ENCODE measurements at regions of chr3 and their contacts with region 1.

Region 1: GRCh38 chr3:119240591-119241434 is at the start of gene B4GALT4:
- DNase-seq: peak; percentile 81
- H3K4me3 Mint-ChIP-seq: peak within 1 kb of the TSS; percentile 81
- H3K27ac Mint-ChIP-seq: peak within 1 kb of the TSS; percentile 86
- H3K4me1 Mint-ChIP-seq: peaks cover 31% of the 10 kb centered on the region
- H3K27me3 Mint-ChIP-seq: no peaks in the 10 kb centered on the region
- total RNA-seq, gene B4GALT4: 13.5 to 14.2 TPM

Region 2: DNA sequence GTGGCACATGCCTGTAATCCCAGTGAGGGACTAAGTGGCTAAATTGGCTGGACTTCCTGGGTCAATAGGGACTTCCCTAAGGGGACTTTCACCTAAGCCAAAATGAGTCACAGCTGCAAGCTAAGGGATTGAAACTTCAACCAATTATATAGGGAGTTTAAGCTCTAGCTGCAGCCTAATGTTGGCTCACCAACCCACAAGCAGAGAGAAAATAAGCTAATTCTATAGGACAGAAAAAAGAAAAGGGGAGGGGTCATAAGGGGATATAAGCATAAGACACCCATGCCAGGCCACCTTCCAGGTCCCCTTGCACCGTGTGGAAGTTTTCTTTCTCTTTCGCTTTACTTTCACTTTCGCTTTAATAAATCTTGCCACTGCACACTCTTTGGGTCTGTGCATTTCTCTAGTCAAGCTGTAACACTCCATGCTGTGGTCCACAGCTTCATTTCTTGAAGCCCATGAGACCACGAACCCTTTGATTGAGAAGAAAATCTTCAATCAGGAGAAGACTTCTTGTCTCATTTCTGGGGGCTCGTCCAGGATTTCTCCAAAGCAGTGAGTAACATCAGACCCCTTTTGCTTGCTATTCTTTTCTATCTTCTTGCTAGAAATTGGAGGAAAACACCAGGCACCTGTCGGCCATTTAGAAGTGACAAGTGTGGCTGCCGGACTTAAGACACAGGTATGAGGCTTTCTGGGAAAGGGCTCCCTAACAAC is 398.5 kb before region 1 on chr3:
- CTCF ChIA-PET with region 1: no interaction called
- POLR2A ChIA-PET with region 1: no interaction called
- intact Hi-C with region 1: no loop called
- DNase-seq: no peak
- H3K4me3 Mint-ChIP-seq: no peak overlapping the region
- H3K27ac Mint-ChIP-seq: no peak overlapping the region
- H3K4me1 Mint-ChIP-seq: no peaks in the 10 kb centered on the region
- H3K27me3 Mint-ChIP-seq: peaks cover 4% of the 10 kb centered on the region

Region 3: DNA sequence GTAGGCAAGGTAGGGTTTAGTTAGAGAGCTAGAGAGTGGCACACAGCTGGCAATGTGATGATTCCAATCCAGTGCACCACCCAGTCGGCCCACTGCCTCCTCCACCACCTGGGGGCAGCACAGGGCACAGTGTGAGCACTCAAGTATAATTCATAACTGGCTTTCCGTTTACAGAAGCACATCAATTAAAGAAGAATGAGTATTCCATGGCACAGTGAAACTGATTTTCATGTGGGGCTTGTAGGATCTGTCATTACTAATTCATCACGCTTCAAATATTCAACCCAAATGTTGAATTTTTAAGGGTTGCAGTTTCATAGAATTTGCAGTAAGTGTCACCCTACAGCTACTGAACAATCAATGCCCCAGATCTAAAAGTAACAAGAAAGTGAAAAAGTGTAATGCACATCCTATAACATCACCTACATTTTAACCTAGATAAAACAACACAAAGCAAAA is 356.0 kb before region 1 on chr3:
- CTCF ChIA-PET with region 1: interaction called, 114 read pairs
- POLR2A ChIA-PET with region 1: no interaction called
- intact Hi-C with region 1: loop called (anchors 1 kb)
- DNase-seq: peak; percentile 84
- H3K4me3 Mint-ChIP-seq: no peak overlapping the region
- H3K27ac Mint-ChIP-seq: no peak overlapping the region
- H3K4me1 Mint-ChIP-seq: no peaks in the 10 kb centered on the region
- H3K27me3 Mint-ChIP-seq: peaks cover 7% of the 10 kb centered on the region

Region 4: DNA sequence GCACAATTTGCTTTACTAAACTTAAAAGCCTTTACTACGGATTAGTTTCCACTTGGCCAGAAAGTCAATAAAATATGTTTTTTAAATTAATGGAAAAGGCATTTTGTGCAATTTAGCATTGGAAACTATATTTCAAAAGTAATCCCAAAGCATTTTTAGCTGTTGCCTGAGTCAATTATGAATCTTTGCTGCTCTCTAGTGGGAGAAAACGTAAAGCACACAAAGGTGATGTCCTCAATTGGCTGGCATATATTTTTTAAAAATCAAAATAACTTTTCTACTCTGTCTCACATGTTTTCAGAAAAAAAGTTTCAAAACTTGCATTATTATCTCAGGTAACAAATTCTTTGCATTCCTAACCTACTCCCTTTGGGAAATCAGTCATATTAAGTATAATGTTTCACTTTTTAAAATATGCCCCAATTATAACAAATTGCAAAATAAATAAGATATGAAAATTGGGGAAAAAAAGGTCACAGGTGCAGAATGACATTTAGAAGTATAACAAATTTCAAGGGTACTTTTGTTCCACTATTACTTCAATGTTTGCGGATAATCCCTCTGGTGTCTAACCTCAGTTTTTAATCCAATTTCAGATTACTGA is 142.1 kb before region 1 on chr3:
- CTCF ChIA-PET with region 1: interaction called, 9 read pairs
- POLR2A ChIA-PET with region 1: no interaction called
- intact Hi-C with region 1: loop called (anchors 1 kb)
- DNase-seq: no peak
- H3K4me3 Mint-ChIP-seq: no peak overlapping the region
- H3K27ac Mint-ChIP-seq: no peak overlapping the region
- H3K4me1 Mint-ChIP-seq: no peaks in the 10 kb centered on the region
- H3K27me3 Mint-ChIP-seq: no peaks in the 10 kb centered on the region

Region 5: GRCh38 chr3:119230745-119231144 is 10.1 kb before region 1 on chr3:
- CTCF ChIA-PET with region 1: interaction called, 9 read pairs
- POLR2A ChIA-PET with region 1: no interaction called
- intact Hi-C with region 1: loop called (anchors 1 kb)
- DNase-seq: no peak
- H3K4me3 Mint-ChIP-seq: no peak overlapping the region
- H3K27ac Mint-ChIP-seq: no peak overlapping the region
- H3K4me1 Mint-ChIP-seq: peaks cover 40% of the 10 kb centered on the region
- H3K27me3 Mint-ChIP-seq: no peaks in the 10 kb centered on the region

Region 6: DNA sequence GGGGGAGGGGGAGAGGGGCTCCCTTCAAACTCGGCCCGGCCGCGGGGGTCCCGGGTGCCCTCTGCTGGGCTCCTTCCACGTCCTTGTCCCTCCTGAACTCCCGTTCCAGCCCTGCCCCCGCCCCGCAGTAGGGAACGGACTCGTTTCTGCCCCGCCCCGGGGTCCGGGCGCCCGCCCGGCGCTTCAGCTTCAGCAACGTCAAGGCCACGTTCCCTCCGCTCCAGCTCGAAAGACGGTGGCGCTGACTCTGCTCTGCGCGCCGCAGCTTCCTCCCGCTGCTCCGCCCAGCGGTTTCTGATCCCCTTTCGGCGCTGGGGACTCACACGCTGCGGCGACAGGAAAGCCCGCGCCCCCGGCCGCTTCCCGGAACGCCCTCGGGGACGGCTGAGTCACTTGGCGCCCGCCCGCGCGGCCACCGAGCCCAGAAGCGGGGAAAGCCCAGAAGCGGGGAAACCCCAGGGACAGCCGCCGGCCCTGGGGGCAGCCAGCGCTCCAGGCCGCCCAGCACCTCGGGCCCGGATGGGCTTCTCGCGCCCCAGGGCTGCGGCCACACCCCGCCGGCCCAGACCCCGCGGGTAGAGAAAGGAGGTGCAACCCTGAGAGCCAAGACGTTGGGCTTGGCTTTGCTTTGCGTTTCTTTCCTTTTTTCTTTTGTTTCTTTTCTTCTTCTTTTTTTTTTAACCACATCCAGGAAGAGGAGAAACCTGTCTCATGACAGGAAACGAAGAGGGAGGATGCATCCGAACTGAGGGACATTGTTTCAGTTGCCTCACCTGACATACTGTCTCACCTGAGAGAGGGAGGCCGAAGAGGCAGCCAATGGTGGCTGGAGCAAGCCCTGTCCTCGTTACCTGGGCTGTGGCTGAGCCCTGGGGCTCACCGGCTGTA is 82.3 kb after region 1 on chr3:
- CTCF ChIA-PET with region 1: interaction called, 8 read pairs
- POLR2A ChIA-PET with region 1: interaction called, 6 read pairs
- intact Hi-C with region 1: loop called (anchors 1 kb)
- DNase-seq: peak; percentile 97
- H3K4me3 Mint-ChIP-seq: peak overlapping the region; percentile 82
- H3K27ac Mint-ChIP-seq: peak overlapping the region; percentile 95
- H3K4me1 Mint-ChIP-seq: peaks cover 41% of the 10 kb centered on the region
- H3K27me3 Mint-ChIP-seq: no peaks in the 10 kb centered on the region

Region 7: DNA sequence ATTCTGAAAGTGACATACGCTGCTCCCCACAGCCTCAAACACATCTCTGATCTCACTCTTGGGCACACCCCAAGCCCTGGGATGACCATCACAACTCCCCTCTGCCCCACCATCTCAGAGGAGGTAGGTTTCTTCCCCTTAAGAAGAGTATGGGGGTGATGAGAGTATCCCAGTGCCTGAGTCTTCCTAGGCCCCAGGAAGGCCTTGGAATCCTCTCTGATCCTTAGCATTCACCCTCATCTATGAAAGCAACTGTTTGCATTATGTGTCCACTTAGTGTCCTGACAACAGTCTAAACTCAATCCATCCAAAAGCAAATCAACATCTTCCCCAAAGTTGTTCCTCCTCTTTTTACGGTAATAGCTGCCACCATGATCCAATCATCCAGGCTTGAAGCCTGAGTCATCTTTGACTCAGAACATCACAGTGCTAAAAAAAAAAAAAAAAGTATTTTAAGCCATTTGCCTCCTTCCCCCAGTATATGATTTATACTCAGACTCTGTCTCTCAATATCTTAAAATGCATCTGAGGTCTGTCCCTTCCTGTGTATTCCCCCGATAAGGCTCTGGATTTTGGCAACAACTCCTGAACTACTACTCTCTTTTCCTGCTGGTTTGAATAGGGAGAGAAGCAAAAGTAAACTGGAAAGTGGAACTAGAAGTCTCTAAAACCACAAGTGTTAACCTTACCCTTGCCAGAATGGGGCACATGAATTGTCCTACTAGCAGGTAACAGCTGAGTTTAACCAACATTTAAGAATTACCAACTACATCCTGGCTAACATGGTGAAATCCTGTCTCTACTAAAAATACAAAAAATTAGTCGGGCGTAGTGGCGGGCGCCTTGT is 397.1 kb after region 1 on chr3:
- CTCF ChIA-PET with region 1: interaction called, 4 read pairs
- POLR2A ChIA-PET with region 1: no interaction called
- intact Hi-C with region 1: loop called (anchors 2 kb)
- DNase-seq: no peak
- H3K4me3 Mint-ChIP-seq: no peak overlapping the region
- H3K27ac Mint-ChIP-seq: peak overlapping the region; percentile 92
- H3K4me1 Mint-ChIP-seq: peaks cover 45% of the 10 kb centered on the region
- H3K27me3 Mint-ChIP-seq: no peaks in the 10 kb centered on the region